ENCODE measurements at regions of chr6 and their contacts with region 1.

Region 1: GRCh38 chr6:160455541-160456213 is 107.5 kb downstream of the SLC22A3 start:
- DNase-seq: peak; percentile 62
- CTCF ChIP-seq: peak; percentile 85

Region 2: GRCh38 chr6:159693128-159693893 is 762.4 kb before region 1 on chr6 and contains the start of gene SOD2:
- in situ Hi-C with region 1: loop called (anchors 25 kb)
- DNase-seq: peak; percentile 92
- CTCF ChIP-seq: no peak

Region 3: GRCh38 chr6:159852877-159853276 is 602.8 kb before region 1 on chr6:
- in situ Hi-C with region 1: loop called (anchors 25 kb)
- DNase-seq: no peak
- CTCF ChIP-seq: no peak

Region 4: GRCh38 chr6:160137989-160138835 is 317.5 kb before region 1 on chr6:
- in situ Hi-C with region 1: loop called (anchors 25 kb)
- DNase-seq: peak; percentile 72
- CTCF ChIP-seq: peak; percentile 59

Region 5: DNA sequence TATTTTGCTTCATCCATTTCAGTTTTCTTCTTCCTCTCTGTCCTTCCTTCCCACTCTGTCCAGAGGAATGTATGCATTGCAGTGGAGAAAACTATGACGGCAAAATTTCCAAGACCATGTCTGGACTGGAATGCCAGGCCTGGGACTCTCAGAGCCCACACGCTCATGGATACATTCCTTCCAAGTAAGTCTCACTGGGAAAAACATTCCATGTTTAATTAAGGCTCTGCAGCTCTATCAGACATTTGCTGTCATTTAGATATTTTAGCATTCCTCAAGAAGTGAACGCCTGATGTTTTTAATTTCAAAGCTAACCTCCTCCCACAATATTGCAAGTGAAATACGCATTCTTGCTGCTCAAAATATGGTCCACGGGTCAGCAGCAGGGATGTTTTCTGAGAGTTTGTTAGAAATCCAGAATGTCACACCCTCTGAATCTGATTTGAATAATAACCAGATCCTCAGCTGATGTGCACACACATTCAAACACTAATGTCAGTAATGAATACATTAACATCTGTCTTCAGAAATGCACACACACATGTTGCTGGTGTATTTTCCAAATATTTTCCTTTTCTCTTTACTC is 259.1 kb after region 1 on chr6:
- in situ Hi-C with region 1: no loop called
- DNase-seq: no peak
- CTCF ChIP-seq: no peak

Measured in GM13976 (cell line).